Motor neuron (in vitro differentiated cells): ENCODE measurements at regions of chr14 and their contacts with region 1.

Region 1: GRCh38 chr14:22589096-22589839 is at the start of gene DAD1:
- ATAC-seq: peak; percentile 92 to 99 (median 98)
- H3K4me3 ChIP-seq: peak within 1 kb of the TSS; percentile 58 to 87 (median 65)
- H3K27ac ChIP-seq: peak within 1 kb of the TSS; percentile 88 to 94
- H3K4me1 ChIP-seq: peaks cover 24 to 25% of the 10 kb centered on the region in 2 donors
- total RNA-seq, gene DAD1: 156 to 485 (median 311) TPM

Region 2: DNA sequence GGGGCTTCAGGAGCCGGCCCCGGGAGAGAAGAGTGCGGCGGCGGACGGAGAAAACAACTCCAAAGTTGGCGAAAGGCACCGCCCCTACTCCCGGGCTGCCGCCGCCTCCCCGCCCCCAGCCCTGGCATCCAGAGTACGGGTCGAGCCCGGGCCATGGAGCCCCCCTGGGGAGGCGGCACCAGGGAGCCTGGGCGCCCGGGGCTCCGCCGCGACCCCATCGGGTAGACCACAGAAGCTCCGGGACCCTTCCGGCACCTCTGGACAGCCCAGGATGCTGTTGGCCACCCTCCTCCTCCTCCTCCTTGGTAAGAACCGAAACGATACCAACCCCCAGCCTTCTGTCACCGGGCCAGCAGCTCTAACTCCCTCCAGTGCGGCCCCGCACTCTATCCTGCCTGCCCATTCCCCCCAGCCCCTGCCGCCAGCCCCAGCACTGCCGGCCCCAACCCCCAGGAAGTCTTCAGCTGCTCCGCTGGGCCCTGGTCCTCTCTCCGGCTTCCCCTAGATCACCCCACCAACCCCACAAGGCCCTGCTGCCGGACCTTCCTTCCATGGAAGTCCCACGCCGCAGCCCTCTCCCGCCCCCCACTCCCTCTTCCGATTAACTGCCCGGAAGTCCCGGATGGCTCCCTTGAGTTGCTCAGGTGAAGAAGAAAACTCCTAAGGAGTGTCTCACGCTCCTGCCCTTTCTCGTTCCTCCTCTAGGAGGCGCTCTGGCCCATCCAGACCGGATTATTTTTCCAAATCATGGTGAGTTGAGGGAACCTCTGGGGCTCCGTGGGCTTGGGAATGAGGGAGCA is 283.0 kb after region 1 on chr14:
- in situ Hi-C with region 1: loop called in 1 of 9 experiments (anchors 25 kb)
- ATAC-seq: peak; percentile 30 to 54 (median 50)
- H3K4me3 ChIP-seq: peak overlapping the region; percentile 31 to 88 (median 54)
- H3K27ac ChIP-seq: peak overlapping the region; percentile 13 to 16
- H3K4me1 ChIP-seq: peaks cover 0 to 5% of the 10 kb centered on the region in 2 donors